ENCODE measurements at regions of chr5 and their contacts with region 1.

Region 1: DNA sequence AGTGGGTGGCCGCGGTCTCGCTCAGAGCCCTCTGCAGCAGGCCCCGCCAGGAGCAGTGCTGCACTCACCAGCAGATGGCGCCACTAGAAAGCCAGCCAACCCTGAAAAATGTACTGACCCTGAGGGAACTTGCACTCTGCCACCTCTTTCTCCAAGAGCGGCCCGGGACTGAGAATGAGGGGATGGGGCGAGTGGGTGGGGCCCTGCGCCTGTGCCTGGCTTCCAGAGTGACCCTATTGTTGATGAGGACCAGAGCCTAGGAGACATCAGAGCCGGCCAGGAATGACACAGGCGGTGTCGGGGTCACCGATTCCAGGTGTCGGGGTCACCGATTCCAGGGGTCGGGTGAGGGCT is 2.9 kb upstream of the IL17B start:
- DNase-seq: peak; percentile 90

Region 2: GRCh38 chr5:149284501-149284900 is 97.5 kb before region 1 on chr5:
- intact Hi-C with region 1: no loop called
- DNase-seq: no peak

Region 3: GRCh38 chr5:149345147-149345875 is 36.7 kb before region 1 on chr5 and contains the start of gene GRPEL2:
- intact Hi-C with region 1: no loop called
- DNase-seq: peak; percentile 98
- total RNA-seq, gene GRPEL2: 11.0 TPM

Region 4: GRCh38 chr5:149434162-149435014 is 52.4 kb after region 1 on chr5:
- intact Hi-C with region 1: loop called (anchors 1 kb)
- DNase-seq: no peak

Region 5: GRCh38 chr5:149485655-149486425 is 103.9 kb after region 1 on chr5:
- intact Hi-C with region 1: loop called (anchors 5 kb)
- DNase-seq: no peak

Region 6: GRCh38 chr5:149561848-149562247 is 179.9 kb after region 1 on chr5:
- intact Hi-C with region 1: loop called (anchors 5 kb)
- DNase-seq: no peak